ENCODE measurements at regions of chr9 and their contacts with region 1.

Region 1: GRCh38 chr9:71285191-71285656 is 163.8 kb upstream of the TRPM3 start:
- DNase-seq: peak; percentile 57 to 80 (median 73)
- H3K4me3 ChIP-seq: no peak overlapping the region
- H3K27ac ChIP-seq: no peak overlapping the region
- H3K4me1 ChIP-seq: no peaks in the 10 kb centered on the region
- H3K27me3 ChIP-seq: no peaks in the 10 kb centered on the region

Region 2: DNA sequence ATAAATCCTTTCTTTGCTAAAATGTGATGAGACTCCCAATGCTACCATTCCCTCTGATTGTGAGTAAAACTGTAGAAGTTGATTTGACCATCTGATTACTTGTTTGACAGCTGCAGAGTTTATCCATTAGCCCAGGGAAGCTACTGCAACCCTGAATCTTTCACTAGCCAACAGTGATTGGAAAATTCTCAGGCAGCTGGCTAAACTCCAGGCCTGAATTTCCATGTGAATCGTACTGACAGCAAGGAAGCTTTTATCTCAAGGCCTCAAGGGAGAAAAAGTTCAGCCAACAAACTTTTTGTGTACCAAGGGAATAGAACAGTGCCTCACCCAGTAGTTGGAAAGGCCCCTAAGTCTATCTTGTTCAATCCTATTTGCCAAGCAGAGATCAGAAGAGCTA is 82.9 kb after region 1 on chr9:
- CTCF ChIA-PET with region 1: no interaction called
- POLR2A ChIA-PET with region 1: no interaction called
- DNase-seq: no peak
- H3K4me3 ChIP-seq: no peak overlapping the region
- H3K27ac ChIP-seq: no peak overlapping the region
- H3K4me1 ChIP-seq: no peaks in the 10 kb centered on the region
- H3K27me3 ChIP-seq: peaks cover 0 to 2% (median 0%) of the 10 kb centered on the region in 5 experiments

Region 3: GRCh38 chr9:72022841-72023240 is 737.6 kb after region 1 on chr9:
- CTCF ChIA-PET with region 1: interaction called, 14 read pairs
- POLR2A ChIA-PET with region 1: no interaction called
- DNase-seq: peak; percentile 39 to 73 (median 70)
- H3K4me3 ChIP-seq: no peak overlapping the region
- H3K27ac ChIP-seq: no peak overlapping the region
- H3K4me1 ChIP-seq: peaks cover 0 to 2% (median 0%) of the 10 kb centered on the region in 4 experiments
- H3K27me3 ChIP-seq: no peaks in the 10 kb centered on the region

Measured in common myeloid progenitor, CD34-positive (primary cell).